Psoas muscle (tissue), 8 donors: ENCODE measurements at regions of chr12 and their contacts with region 1.

Region 1: GRCh38 chr12:133037207-133038005 is at the start of gene ZNF84:
- DNase-seq: peak; percentile 97 to 98
- ATAC-seq: peak; percentile 98 to 99 (median 98)
- H3K4me3 ChIP-seq: peak within 1 kb of the TSS; percentile 78
- H3K27ac ChIP-seq: peak within 1 kb of the TSS; percentile 90
- H3K4me1 ChIP-seq: peaks cover 6% of the 10 kb centered on the region
- H3K27me3 ChIP-seq: no peaks in the 10 kb centered on the region
- CTCF ChIP-seq: no peak
- total RNA-seq, gene ZNF84: 9.0 to 11.5 (median 10.5) TPM

Region 2: DNA sequence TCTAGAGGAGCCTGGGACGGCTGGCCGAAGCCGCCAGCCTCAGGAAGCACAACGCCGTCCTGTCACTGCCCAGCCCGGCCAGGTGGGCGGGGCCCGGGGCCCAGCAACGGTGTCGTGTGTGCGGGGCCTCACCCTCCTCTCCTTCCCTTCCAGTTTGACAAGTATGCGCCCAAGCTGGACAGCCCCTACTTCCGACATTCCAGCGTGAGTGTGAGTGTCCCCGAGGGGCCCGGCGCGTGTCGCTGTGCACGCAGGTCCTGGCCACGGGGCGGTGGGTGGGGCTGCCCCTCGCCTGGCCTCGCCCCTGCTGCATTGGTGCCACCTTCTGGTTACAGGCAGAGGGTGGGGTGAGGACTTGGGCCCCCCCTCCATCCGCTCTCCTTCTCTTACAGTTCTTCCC is 465.3 kb before region 1 on chr12:
- intact Hi-C with region 1: no loop called
- DNase-seq: no peak
- ATAC-seq: no peak
- H3K4me3 ChIP-seq: no peak overlapping the region
- H3K27ac ChIP-seq: no peak overlapping the region
- H3K4me1 ChIP-seq: no peaks in the 10 kb centered on the region
- H3K27me3 ChIP-seq: no peaks in the 10 kb centered on the region
- CTCF ChIP-seq: no peak

Region 3: DNA sequence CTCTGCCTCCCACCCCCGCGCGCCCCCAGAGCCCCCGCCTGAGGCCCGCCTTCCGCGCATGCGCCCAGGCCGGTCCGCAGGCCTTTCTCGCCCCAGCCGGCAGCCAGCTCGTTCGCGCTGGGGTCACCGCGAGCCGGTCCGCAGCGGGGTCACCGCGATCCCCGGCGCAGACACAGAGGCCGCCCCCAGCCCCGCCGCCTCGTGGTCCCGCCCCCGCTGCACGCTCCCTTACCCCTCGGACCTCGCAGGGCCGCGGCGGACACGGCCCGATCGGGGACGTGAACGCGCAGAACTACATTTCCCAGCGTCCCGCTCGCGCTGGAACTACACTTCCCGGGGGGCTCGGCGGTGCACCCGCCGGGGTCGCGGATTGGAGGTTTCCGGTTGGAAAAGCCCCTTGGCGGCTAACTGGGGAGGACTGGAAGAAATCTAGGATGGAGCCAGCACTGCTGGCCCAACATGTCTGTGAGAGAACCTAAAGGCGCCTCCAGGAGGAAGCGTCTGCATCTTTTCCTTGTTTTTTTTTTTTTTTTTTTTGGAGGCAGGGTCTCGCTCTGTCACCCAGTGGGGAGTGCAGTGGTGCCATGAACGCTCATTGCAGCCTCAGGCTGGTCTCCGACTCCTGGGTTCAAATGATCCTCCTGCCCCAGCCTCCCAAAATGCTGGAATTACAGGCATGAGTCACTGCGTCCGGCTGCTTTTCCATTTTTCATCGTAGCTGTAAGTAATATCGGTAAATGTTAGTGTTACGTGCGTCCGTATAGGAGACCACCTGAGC is 81.2 kb before region 1 on chr12 and contains the start of gene ZNF605:
- intact Hi-C with region 1: loop called in 1 of 2 experiments (anchors 5 kb)
- DNase-seq: peak; percentile 91 to 95
- ATAC-seq: peak; percentile 94 to 97 (median 96)
- H3K4me3 ChIP-seq: peak within 1 kb of the TSS; percentile 81
- H3K27ac ChIP-seq: peak within 1 kb of the TSS; percentile 88
- H3K4me1 ChIP-seq: peaks cover 3% of the 10 kb centered on the region
- H3K27me3 ChIP-seq: no peaks in the 10 kb centered on the region
- CTCF ChIP-seq: no peak
- total RNA-seq, gene ZNF605: 6.6 to 8.8 (median 7.8) TPM

Region 4: GRCh38 chr12:133106253-133106652 is 68.8 kb after region 1 on chr12:
- intact Hi-C with region 1: no loop called
- DNase-seq: no peak
- ATAC-seq: no peak
- H3K4me3 ChIP-seq: no peak overlapping the region
- H3K27ac ChIP-seq: no peak overlapping the region
- H3K4me1 ChIP-seq: no peaks in the 10 kb centered on the region
- H3K27me3 ChIP-seq: no peaks in the 10 kb centered on the region
- CTCF ChIP-seq: no peak